ENCODE measurements at regions of chr19 and their contacts with region 1.

Region 1: DNA sequence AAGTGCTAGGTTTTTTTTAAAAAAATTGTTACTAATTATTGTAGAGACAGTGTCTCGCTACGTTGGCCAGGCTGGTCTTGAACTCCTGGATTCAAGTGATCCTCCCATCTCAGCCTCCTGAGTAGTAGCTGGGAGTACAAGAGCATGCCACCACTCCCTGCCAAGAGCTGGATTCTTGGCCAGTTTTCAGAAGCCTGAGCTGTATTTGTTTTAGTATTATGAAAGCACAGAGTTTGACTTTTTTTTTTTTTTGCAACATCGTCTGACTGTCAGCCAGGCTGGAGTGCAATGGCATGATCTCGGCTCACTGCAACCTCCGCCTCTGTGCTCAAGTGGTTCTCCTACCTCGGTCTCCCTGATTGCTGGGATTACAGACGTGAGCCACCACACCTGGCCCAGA is 7.0 kb downstream of the ARMC6 start:
- DNase-seq: no peak
- H3K4me3 ChIP-seq: no peak overlapping the region
- H3K27ac ChIP-seq: no peak overlapping the region
- H3K4me1 ChIP-seq: no peaks in the 10 kb centered on the region
- H3K27me3 ChIP-seq: no peaks in the 10 kb centered on the region
- CTCF ChIP-seq: no peak

Region 2: DNA sequence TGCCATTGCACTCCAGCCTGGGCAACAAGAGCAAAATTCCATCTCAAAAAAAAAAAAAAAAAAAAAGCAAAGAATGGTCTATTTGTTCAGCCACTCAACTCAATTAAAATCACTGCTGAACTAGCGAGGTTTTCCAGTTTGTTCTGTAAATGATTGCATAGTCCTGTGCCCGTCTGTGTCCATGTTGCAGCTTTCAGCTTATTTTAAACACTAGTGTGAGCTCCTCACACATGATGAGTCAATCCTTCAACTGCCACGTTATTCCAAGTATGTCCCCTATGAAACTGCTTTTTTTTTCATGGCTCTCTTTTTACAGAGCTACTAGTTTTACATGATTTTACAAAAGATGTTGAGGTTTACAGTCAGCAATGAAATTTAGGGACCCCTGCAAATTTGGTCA is 19.3 kb before region 1 on chr19:
- CTCF ChIA-PET with region 1: no interaction called
- dilution Hi-C with region 1: no loop called
- in situ Hi-C with region 1: no loop called
- intact Hi-C with region 1: no loop called
- DNase-seq: no peak
- H3K4me3 ChIP-seq: no peak overlapping the region
- H3K27ac ChIP-seq: no peak overlapping the region
- H3K4me1 ChIP-seq: peaks cover 9% of the 10 kb centered on the region
- H3K27me3 ChIP-seq: no peaks in the 10 kb centered on the region
- CTCF ChIP-seq: no peak

Region 3: DNA sequence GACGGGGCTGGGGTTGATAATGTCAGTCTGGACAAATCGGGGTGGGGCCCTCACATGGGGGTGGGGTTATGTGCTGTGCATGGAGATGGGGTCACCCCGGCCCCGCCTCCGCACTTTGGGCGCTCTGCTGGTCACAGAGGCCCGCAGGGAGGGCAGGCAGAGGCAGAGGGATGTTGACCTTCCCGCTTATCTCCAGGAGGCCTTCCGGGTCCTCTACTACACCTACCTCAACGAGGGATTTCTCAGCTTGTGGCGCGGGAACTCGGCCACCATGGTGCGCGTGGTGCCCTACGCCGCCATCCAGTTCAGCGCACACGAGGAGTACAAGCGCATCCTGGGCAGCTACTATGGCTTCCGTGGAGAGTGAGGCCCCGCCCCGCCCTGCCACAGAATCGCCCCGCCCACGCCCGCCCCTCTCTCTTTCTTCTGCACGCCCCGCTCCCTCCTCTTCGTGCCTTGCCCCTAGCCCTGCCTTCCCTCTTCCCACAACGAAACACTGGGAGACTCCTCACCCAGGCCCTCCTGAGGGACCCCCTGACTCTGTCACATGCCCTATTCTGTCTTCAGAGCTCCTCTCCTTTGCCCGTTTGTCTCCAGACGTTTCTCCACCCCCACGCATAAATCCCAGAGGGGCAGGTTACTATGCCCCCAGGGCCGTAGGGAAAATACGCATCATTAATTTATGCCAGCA is 65.1 kb after region 1 on chr19:
- CTCF ChIA-PET with region 1: no interaction called
- dilution Hi-C with region 1: loop called (anchors 5 kb)
- in situ Hi-C with region 1: no loop called
- intact Hi-C with region 1: no loop called
- DNase-seq: no peak
- H3K4me3 ChIP-seq: peak overlapping the region in 2 of 3 experiments; percentile 2 to 39
- H3K27ac ChIP-seq: no peak overlapping the region
- H3K4me1 ChIP-seq: no peaks in the 10 kb centered on the region
- H3K27me3 ChIP-seq: no peaks in the 10 kb centered on the region
- CTCF ChIP-seq: no peak

Measured in mammary epithelial cell (primary cell).